ENCODE measurements at regions of chr2 and their contacts with region 1.

Region 1: DNA sequence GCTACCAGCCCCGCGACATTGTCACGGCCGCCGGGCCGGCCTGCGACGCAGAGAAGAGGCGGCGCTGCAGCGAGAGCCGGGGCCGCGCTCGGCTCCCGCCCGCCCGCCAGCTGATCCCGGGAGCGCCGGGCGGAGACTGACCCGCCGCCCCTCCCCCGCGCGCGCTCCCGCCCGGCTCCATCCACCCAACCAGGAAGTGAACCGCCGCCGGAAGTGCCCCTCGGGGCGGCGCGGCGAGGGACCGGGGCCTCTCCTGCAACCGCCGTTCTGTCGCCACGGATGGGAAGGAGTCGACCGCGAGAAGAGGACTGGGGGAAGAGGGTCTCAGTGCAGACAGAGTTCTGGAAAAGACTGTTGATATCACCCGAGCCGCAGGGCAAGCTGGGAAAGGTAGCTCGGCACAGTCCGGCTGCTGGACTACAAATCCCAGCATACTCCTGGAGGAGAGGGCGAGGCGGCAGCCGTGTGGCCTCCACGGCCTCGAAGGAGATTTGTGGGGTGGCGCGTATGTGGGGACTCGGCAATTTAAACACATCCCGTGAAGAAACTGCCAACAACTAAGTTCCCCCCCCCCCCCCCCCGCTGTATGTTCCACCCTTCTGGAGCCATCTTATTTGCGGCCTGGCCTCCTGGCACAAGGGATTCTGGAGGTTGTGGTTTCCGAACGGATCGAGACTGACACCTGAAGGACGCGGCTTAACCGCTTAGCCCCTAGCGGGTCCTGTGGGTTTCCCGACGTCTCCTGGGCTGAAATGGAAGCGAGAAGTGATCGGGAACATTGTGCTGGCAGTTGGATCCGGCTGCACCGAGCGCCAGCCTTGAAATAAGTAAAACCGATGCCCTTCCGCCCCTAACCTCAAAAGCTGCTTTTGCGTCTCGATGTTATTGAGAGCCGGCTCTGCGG is at the start of gene AAK1:
- DNase-seq: peak; percentile 69 to 89 (median 85)
- ATAC-seq: peak; percentile 71
- H3K4me3 ChIP-seq: peak within 1 kb of the TSS; percentile 80
- H3K4me3 Mint-ChIP-seq: peak within 1 kb of the TSS; percentile 95 to 99 (median 98)
- H3K27ac ChIP-seq: peak within 1 kb of the TSS; percentile 86
- H3K27ac Mint-ChIP-seq: peak within 1 kb of the TSS; percentile 94 to 99 (median 96)
- H3K4me1 ChIP-seq: peaks cover 43 to 50% of the 10 kb centered on the region in 2 donors
- H3K4me1 Mint-ChIP-seq: peaks cover 51 to 69% (median 59%) of the 10 kb centered on the region in 7 donors
- H3K27me3 ChIP-seq: no peaks in the 10 kb centered on the region
- H3K27me3 Mint-ChIP-seq: no peaks in the 10 kb centered on the region
- total RNA-seq, gene AAK1: 114 to 253 (median 218) TPM

Region 2: DNA sequence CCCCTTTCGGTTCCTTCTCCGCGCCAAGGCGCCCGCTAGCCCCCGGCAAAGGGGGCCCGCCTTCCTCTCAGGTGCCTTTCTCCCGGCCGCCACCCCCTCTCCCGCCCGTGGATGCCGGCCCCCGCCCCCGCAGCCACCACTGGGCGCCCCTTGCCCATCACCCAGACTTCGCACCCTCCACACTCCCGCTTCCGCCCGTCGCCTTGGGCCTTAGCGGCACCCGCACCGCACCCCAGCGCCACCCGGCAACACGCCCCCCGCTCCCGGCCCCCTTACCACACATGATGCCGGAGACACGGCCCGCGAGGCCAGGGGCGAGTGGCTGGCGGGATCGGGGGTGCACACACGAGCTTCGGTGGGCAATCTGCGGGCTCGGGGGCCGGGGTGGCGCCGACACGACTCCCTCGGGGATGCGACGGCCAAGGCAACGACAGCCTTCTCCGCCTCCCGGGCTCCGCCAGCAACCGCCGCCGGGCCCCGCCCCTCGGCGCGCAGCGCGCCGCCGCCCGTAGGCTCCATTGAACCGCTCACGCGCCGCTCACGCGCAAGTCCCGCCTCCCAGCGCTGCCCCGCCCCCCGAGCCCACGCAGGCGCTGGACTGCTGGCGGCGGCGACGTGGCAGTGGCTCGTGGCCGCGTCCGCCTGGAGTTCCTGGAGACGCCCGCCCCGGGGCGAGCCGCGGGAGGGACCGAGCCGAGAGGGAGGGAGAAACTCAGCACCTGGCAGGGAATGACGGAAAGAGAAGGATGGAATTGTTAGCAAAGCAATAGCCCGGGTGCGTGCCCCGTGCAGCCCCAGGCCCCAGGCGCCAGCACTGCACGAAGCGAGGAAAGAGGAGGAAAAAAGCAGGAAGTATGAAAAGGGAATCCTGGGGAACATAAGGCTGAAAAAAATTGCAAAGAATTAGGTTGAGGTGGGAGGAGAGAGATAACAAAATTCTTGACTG is 256.8 kb before region 1 on chr2 and contains the start of gene GFPT1:
- CTCF ChIA-PET with region 1: no interaction called
- POLR2A ChIA-PET with region 1: no interaction called
- intact Hi-C with region 1: loop called (anchors 1 kb)
- DNase-seq: peak; percentile 85 to 96 (median 91)
- ATAC-seq: peak; percentile 99
- H3K4me3 ChIP-seq: peak within 1 kb of the TSS; percentile 68
- H3K4me3 Mint-ChIP-seq: peak within 1 kb of the TSS; percentile 84 to 94 (median 88)
- H3K27ac ChIP-seq: peak within 1 kb of the TSS; percentile 83
- H3K27ac Mint-ChIP-seq: peak within 1 kb of the TSS; percentile 63 to 94 (median 86)
- H3K4me1 ChIP-seq: peaks cover 17 to 18% of the 10 kb centered on the region in 2 donors
- H3K4me1 Mint-ChIP-seq: peaks cover 28 to 53% (median 41%) of the 10 kb centered on the region in 7 donors
- H3K27me3 ChIP-seq: no peaks in the 10 kb centered on the region
- H3K27me3 Mint-ChIP-seq: no peaks in the 10 kb centered on the region
- total RNA-seq, gene GFPT1: 12.8 to 29.8 (median 16.6) TPM

Region 3: DNA sequence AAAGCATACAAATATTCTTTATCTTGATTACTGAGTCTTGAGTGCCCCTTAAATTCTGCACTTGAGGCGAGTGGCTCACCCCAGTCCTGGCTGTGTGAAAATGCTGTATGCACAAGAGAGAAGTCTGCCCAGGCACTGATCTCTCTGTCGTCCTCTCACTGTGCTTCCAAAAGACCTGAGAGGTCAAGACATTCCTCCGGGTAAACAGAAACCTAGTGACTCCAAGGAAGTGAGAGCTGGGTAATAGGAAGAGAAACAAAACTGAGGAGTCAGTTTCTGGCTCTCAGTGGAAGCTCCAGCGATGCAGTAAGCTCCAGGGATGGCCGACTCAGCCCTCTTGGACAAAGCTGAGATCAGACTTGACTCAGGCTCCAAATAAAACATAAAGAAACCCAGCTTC is 71.2 kb before region 1 on chr2:
- CTCF ChIA-PET with region 1: interaction called, 3 read pairs
- POLR2A ChIA-PET with region 1: interaction called, 4 read pairs
- intact Hi-C with region 1: loop called in 1 of 2 experiments (anchors 5 kb)
- DNase-seq: no peak
- ATAC-seq: no peak
- H3K4me3 ChIP-seq: no peak overlapping the region
- H3K4me3 Mint-ChIP-seq: peak overlapping the region in 5 of 10 donors; percentile 30 to 55 (median 54)
- H3K27ac ChIP-seq: no peak overlapping the region
- H3K27ac Mint-ChIP-seq: peak overlapping the region; percentile 33 to 89 (median 75)
- H3K4me1 ChIP-seq: peaks cover 37 to 52% of the 10 kb centered on the region in 2 donors
- H3K4me1 Mint-ChIP-seq: peaks cover 53 to 95% (median 85%) of the 10 kb centered on the region in 7 donors
- H3K27me3 ChIP-seq: no peaks in the 10 kb centered on the region
- H3K27me3 Mint-ChIP-seq: no peaks in the 10 kb centered on the region

Region 4: DNA sequence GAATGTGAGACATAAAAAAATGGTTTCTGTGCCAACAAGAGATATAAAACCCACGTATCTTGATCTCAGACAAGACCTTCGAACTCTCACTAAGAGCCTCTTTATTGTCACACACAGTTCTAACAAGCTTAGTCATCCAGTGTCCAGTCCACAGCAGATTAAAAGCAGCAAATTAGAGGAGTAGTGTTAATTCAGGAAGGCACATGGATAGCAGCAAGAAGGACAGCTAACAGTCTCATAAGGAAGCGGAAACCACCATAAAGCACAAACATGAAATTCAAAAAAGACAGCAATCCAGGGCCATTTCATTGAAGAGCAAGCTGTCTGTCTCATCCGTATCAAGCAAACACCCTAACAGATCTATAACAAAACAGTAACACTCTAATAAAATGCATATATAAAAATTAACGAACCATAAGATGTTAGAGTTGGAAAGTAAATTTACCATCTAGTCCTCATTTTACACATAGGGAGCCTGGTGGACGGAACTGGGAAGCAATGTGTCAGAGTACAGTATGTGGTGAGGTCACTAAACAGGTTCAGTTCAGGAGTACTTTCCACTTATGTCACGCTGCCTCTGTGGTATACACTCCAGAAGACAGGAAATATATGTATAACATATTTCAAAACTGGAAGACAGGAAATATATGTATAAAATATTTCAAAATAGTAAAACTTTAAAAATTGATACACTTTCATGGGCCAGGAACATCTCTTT is 18.6 kb before region 1 on chr2:
- CTCF ChIA-PET with region 1: interaction called, 5 read pairs
- POLR2A ChIA-PET with region 1: interaction called, 45 read pairs
- intact Hi-C with region 1: loop called (anchors 1 kb)
- DNase-seq: peak in 1 of 9 donors; percentile 30
- ATAC-seq: peak; percentile 50
- H3K4me3 ChIP-seq: peak overlapping the region; percentile 0
- H3K4me3 Mint-ChIP-seq: no peak overlapping the region
- H3K27ac ChIP-seq: peak overlapping the region; percentile 16
- H3K27ac Mint-ChIP-seq: no peak overlapping the region
- H3K4me1 ChIP-seq: peaks cover 57 to 74% of the 10 kb centered on the region in 2 donors
- H3K4me1 Mint-ChIP-seq: peaks cover 0 to 25% (median 0%) of the 10 kb centered on the region in 7 donors
- H3K27me3 ChIP-seq: no peaks in the 10 kb centered on the region
- H3K27me3 Mint-ChIP-seq: no peaks in the 10 kb centered on the region

Region 5: DNA sequence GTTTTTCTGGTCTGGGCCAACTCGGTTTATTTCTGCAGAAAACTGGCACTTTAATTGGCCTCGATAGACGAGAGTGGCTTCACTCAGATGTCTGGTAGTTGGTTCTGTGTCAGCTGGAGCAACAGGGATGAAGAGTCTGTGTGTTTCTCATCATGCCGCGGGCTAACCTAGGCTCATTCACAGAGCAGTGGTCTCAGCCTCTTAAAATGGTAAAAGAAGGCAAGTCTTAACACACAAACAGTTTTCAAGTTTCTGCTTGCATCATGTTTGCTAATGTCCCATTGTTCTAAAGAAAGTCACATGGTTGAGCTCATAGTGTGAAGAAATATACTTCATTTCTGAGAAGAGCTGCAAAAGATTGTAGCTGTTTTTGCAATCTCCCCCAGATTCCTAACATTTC is 60.6 kb after region 1 on chr2:
- CTCF ChIA-PET with region 1: interaction called, 58 read pairs
- POLR2A ChIA-PET with region 1: interaction called, 292 read pairs
- intact Hi-C with region 1: no loop called
- DNase-seq: no peak
- ATAC-seq: no peak
- H3K4me3 ChIP-seq: no peak overlapping the region
- H3K4me3 Mint-ChIP-seq: no peak overlapping the region
- H3K27ac ChIP-seq: no peak overlapping the region
- H3K27ac Mint-ChIP-seq: no peak overlapping the region
- H3K4me1 ChIP-seq: peaks cover 0 to 3% of the 10 kb centered on the region in 2 donors
- H3K4me1 Mint-ChIP-seq: peaks cover 6 to 49% (median 26%) of the 10 kb centered on the region in 7 donors
- H3K27me3 ChIP-seq: no peaks in the 10 kb centered on the region
- H3K27me3 Mint-ChIP-seq: peaks cover 0 to 6% (median 0%) of the 10 kb centered on the region in 5 donors

Region 6: GRCh38 chr2:69829256-69830046 is 185.6 kb after region 1 on chr2 and contains the start of gene GMCL1:
- CTCF ChIA-PET with region 1: interaction called, 3 read pairs
- POLR2A ChIA-PET with region 1: interaction called, 7 read pairs
- intact Hi-C with region 1: loop called (anchors 1 kb)
- DNase-seq: peak; percentile 98 to 100 (median 99)
- ATAC-seq: peak; percentile 97
- H3K4me3 ChIP-seq: peak within 1 kb of the TSS; percentile 81
- H3K4me3 Mint-ChIP-seq: peak within 1 kb of the TSS; percentile 83 to 97 (median 94)
- H3K27ac ChIP-seq: peak within 1 kb of the TSS; percentile 88
- H3K27ac Mint-ChIP-seq: peak within 1 kb of the TSS; percentile 89 to 97 (median 95)
- H3K4me1 ChIP-seq: peaks cover 10 to 17% of the 10 kb centered on the region in 2 donors
- H3K4me1 Mint-ChIP-seq: peaks cover 31 to 61% (median 54%) of the 10 kb centered on the region in 7 donors
- H3K27me3 ChIP-seq: no peaks in the 10 kb centered on the region
- H3K27me3 Mint-ChIP-seq: no peaks in the 10 kb centered on the region
- total RNA-seq, gene GMCL1: 24.9 to 30.5 (median 27.3) TPM

Region 7: GRCh38 chr2:71068218-71069035 is 1424.6 kb after region 1 on chr2 and contains the start of gene NAGK:
- CTCF ChIA-PET with region 1: no interaction called
- POLR2A ChIA-PET with region 1: no interaction called
- intact Hi-C with region 1: loop called in 1 of 2 experiments (anchors 5 kb)
- DNase-seq: peak; percentile 97 to 99 (median 99)
- ATAC-seq: peak; percentile 86
- H3K4me3 ChIP-seq: peak within 1 kb of the TSS; percentile 81
- H3K4me3 Mint-ChIP-seq: peak within 1 kb of the TSS; percentile 89 to 100 (median 98)
- H3K27ac ChIP-seq: peak within 1 kb of the TSS; percentile 96
- H3K27ac Mint-ChIP-seq: peak within 1 kb of the TSS; percentile 97 to 100 (median 99)
- H3K4me1 ChIP-seq: peaks cover 39 to 50% of the 10 kb centered on the region in 2 donors
- H3K4me1 Mint-ChIP-seq: peaks cover 40 to 68% (median 57%) of the 10 kb centered on the region in 7 donors
- H3K27me3 ChIP-seq: no peaks in the 10 kb centered on the region
- H3K27me3 Mint-ChIP-seq: peaks cover 0 to 7% (median 0%) of the 10 kb centered on the region in 5 donors
- total RNA-seq, gene NAGK: 92.4 to 169 (median 127) TPM

Measured in naive thymus-derived CD4-positive, alpha-beta T cell (primary cell).